Naive thymus-derived CD4-positive, alpha-beta T cell (primary cell): ENCODE measurements at regions of chr11 and their contacts with region 1.

Region 1: DNA sequence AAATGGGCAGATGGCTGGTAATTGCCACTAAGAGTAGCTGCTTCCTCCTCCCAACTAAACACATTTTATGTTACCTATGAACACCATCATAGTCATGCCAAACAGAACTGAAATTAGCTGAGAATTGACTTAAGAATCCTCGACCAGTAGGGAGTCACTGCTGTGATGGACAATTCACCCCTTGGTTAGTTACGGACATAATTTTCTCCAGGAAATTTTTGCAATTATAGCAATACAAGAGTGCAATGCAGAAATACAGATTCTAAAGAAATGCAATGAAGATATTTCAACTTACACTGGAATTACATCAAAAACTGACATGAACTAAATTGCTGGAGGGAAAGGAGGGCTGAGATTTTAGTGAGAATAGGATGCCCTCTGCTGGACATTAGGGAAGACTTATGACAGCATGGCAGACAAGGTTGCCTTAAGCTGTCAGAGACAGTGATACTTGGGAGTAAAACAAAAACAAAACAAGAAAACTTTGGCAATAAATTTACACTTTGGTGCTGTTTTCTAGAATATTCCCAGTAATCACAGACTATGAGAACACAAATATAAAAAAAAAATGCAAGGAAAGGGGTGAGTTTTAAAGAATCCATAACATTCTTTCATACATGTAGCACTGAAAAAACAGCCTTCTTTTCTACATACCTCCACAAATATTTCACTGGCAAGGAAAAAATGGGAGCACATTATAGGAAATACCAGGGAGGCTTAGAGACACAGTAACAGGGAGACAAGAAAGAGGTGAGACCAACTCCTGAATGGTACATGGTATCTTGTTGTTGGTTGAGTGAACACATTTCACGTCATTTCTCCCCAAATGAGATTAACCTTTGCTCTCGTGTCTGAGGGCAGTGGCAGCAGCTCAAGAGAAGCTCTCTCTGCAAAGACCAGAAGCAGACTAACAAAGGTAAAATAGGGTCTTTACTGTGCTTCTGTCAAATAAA is 11.2 kb upstream of the PPP2R1B start:
- DNase-seq: peak in 7 of 9 donors; percentile 43 to 71 (median 57)
- ATAC-seq: peak; percentile 89
- H3K4me3 ChIP-seq: no peak overlapping the region
- H3K4me3 Mint-ChIP-seq: no peak overlapping the region
- H3K27ac ChIP-seq: no peak overlapping the region
- H3K27ac Mint-ChIP-seq: no peak overlapping the region
- H3K4me1 ChIP-seq: no peaks in the 10 kb centered on the region
- H3K4me1 Mint-ChIP-seq: no peaks in the 10 kb centered on the region
- H3K27me3 ChIP-seq: no peaks in the 10 kb centered on the region
- H3K27me3 Mint-ChIP-seq: no peaks in the 10 kb centered on the region

Region 2: GRCh38 chr11:111454561-111455192 is 322.7 kb before region 1 on chr11:
- CTCF ChIA-PET with region 1: no interaction called
- POLR2A ChIA-PET with region 1: no interaction called
- intact Hi-C with region 1: loop called in 1 of 2 experiments (anchors 2 kb)
- DNase-seq: peak in 3 of 9 donors; percentile 14 to 64 (median 23)
- ATAC-seq: no peak
- H3K4me3 ChIP-seq: no peak overlapping the region
- H3K4me3 Mint-ChIP-seq: no peak overlapping the region
- H3K27ac ChIP-seq: no peak overlapping the region
- H3K27ac Mint-ChIP-seq: no peak overlapping the region
- H3K4me1 ChIP-seq: no peaks in the 10 kb centered on the region
- H3K4me1 Mint-ChIP-seq: peaks cover 0 to 3% (median 0%) of the 10 kb centered on the region in 7 donors
- H3K27me3 ChIP-seq: no peaks in the 10 kb centered on the region
- H3K27me3 Mint-ChIP-seq: peaks cover 0 to 17% (median 8%) of the 10 kb centered on the region in 5 donors

Region 3: GRCh38 chr11:111565114-111565720 is 212.2 kb before region 1 on chr11:
- CTCF ChIA-PET with region 1: interaction called, 9 read pairs
- POLR2A ChIA-PET with region 1: no interaction called
- intact Hi-C with region 1: loop called (anchors 1 kb)
- DNase-seq: peak; percentile 11 to 64 (median 54)
- ATAC-seq: peak; percentile 60
- H3K4me3 ChIP-seq: no peak overlapping the region
- H3K4me3 Mint-ChIP-seq: no peak overlapping the region
- H3K27ac ChIP-seq: no peak overlapping the region
- H3K27ac Mint-ChIP-seq: no peak overlapping the region
- H3K4me1 ChIP-seq: no peaks in the 10 kb centered on the region
- H3K4me1 Mint-ChIP-seq: peaks cover 0 to 1% (median 0%) of the 10 kb centered on the region in 7 donors
- H3K27me3 ChIP-seq: no peaks in the 10 kb centered on the region
- H3K27me3 Mint-ChIP-seq: peaks cover 0 to 3% (median 0%) of the 10 kb centered on the region in 5 donors

Region 4: DNA sequence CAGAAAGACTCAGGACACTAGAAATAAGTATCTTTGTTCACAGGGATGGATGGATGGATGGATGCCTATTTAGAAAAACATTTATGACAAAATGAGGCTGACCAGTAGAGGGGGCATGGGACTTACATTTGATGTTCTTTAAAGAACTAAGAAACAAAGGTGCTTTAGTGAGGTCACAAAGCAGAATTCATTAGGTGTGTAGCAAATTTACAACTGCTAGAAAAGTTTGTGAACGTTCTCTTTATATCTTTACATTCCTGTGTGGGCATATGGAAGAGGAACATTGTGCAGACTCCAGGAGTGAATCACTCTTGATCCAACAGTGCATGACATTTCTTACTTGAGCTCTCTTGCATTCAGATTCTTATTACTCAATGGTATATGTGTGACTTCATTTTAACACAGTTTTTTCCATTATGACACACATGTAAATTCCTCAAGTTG is 191.0 kb before region 1 on chr11:
- CTCF ChIA-PET with region 1: interaction called, 42 read pairs
- POLR2A ChIA-PET with region 1: no interaction called
- intact Hi-C with region 1: loop called (anchors 1 kb)
- DNase-seq: peak in 7 of 9 donors; percentile 37 to 65 (median 56)
- ATAC-seq: peak; percentile 83
- H3K4me3 ChIP-seq: no peak overlapping the region
- H3K4me3 Mint-ChIP-seq: no peak overlapping the region
- H3K27ac ChIP-seq: no peak overlapping the region
- H3K27ac Mint-ChIP-seq: no peak overlapping the region
- H3K4me1 ChIP-seq: no peaks in the 10 kb centered on the region
- H3K4me1 Mint-ChIP-seq: peaks cover 0 to 2% (median 0%) of the 10 kb centered on the region in 7 donors
- H3K27me3 ChIP-seq: no peaks in the 10 kb centered on the region
- H3K27me3 Mint-ChIP-seq: peaks cover 0 to 11% (median 3%) of the 10 kb centered on the region in 5 donors

Region 5: DNA sequence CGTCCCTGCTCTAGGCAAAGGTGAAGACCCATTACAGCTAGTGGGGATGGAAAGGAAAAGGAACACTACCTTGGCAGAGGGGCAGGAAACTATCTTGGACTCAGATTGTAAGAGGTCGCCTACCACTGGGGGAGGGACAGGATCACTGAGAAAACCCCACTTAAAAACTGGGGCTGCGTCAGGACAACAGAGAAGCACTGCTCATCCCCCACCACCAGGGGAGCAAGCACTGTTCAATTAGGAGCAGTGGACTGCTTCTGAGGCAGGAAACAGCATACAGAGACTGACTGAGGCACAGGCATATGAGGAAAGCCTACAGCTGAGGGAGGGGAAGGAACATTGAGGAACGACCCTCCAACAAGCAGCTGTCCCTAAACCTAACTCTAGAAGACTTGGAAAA is 227.0 kb after region 1 on chr11:
- CTCF ChIA-PET with region 1: no interaction called
- POLR2A ChIA-PET with region 1: no interaction called
- intact Hi-C with region 1: no loop called
- DNase-seq: peak in 1 of 9 donors; percentile 3
- ATAC-seq: peak; percentile 68
- H3K4me3 ChIP-seq: no peak overlapping the region
- H3K4me3 Mint-ChIP-seq: no peak overlapping the region
- H3K27ac ChIP-seq: no peak overlapping the region
- H3K27ac Mint-ChIP-seq: peak overlapping the region in 1 of 9 donors; percentile 20
- H3K4me1 ChIP-seq: no peaks in the 10 kb centered on the region
- H3K4me1 Mint-ChIP-seq: no peaks in the 10 kb centered on the region
- H3K27me3 ChIP-seq: no peaks in the 10 kb centered on the region
- H3K27me3 Mint-ChIP-seq: peaks cover 0 to 30% (median 14%) of the 10 kb centered on the region in 5 donors